Activated CD8-positive, alpha-beta T cell treated with anti-CD3 and anti-CD28 coated beads for 36 hours (primary cell): ENCODE measurements at regions of chr15 and their contacts with region 1.

Region 1: DNA sequence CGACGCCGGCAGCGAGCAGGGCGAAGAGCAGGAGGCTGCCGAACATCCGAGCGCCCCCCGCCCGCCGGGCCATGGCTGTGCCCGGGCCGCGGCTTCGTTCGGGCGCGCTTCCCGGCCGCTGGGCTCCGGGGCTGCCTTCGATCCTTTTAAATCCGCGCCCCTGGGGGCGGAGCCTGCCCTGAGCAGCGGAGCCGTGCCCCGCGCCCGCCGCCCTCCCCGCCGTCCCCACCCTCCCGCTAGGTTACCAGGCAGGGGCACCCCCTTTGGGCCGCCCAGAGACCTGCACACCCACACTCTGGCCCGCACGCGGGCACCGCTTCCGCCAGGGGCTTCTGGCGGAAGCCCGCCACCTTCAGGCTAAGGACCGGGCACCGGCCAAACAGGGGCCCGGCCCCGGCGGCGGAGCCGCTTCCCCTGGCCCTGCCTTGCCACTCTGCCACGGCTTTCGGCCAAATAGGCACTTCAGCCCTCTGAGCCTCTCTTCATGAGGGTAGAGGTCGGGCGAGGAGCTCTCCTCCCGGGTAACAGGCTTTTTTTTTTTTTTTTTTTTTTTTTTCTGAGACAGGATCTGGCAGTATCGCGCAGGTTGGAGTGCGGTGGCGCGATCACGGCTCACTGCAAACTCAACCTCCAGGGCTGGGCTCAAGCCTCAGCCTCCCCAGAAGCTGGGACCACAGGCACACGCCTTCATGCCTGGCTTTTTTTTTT is at the start of gene NMB:
- DNase-seq: peak; percentile 86
- ATAC-seq: peak; percentile 64
- H3K4me3 Mint-ChIP-seq: peak within 1 kb of the TSS; percentile 69
- H3K27ac Mint-ChIP-seq: peak within 1 kb of the TSS; percentile 83
- H3K4me1 Mint-ChIP-seq: peaks cover 31% of the 10 kb centered on the region
- H3K27me3 Mint-ChIP-seq: no peaks in the 10 kb centered on the region
- CTCF ChIP-seq: peak; percentile 71
- total RNA-seq, gene NMB: 1.7 to 2.7 TPM

Region 2: DNA sequence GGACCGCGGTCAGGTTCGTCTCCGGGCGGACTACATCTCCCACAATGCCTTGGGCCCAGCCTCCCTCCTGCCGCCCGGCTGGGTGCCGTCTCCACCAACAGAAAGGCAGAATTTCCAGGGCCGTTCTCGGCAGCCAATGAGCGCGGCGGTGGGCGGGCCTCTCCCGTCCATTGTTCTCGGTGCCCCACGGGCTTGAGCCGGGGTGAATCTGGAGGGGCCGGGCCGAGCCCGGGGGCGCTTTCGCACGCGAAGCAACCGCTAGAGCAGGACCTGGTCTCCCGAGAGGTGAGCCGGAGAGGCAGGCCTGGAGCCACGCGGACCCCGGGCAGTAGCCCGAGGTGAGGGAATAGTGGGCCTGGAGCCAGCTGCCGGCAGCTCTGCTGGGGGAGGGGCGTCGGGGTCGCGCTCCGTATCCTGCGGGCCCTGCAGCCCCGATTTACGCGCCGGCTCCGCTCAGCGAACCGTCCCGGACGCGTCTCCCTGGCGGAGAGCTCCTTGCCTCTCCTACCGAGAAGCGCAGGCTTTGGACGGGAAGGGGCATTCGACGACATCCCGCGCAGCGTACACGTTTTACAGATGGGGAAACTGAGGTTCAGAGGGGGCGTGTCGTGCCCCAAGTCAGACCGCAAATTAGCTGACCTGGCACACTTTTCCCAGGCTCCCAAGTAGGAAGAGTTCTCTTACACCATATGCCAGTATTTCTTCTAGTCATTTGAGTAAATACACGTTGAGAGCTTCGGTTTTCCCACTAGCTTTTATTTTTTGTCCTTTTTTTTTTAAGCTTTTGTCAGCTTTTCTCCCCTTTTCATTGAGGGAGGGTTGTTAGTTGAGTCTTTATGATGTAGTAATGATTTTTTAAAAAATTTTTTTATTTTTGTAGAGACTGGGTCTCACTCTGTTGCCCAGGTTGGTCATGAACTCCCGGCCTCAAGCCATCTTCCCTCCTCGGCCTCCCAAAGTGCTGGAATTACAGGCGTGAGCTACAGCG is 57.1 kb before region 1 on chr15 and contains the start of gene ZSCAN2:
- CTCF ChIA-PET with region 1: interaction called, 33 read pairs
- POLR2A ChIA-PET with region 1: interaction called, 20 read pairs
- intact Hi-C with region 1: no loop called
- DNase-seq: peak; percentile 98
- ATAC-seq: peak; percentile 96
- H3K4me3 Mint-ChIP-seq: peak within 1 kb of the TSS; percentile 91
- H3K27ac Mint-ChIP-seq: peak within 1 kb of the TSS; percentile 80
- H3K4me1 Mint-ChIP-seq: peaks cover 73% of the 10 kb centered on the region
- H3K27me3 Mint-ChIP-seq: no peaks in the 10 kb centered on the region
- CTCF ChIP-seq: no peak
- total RNA-seq, gene ZSCAN2: 6.6 to 7.6 TPM

Region 3: DNA sequence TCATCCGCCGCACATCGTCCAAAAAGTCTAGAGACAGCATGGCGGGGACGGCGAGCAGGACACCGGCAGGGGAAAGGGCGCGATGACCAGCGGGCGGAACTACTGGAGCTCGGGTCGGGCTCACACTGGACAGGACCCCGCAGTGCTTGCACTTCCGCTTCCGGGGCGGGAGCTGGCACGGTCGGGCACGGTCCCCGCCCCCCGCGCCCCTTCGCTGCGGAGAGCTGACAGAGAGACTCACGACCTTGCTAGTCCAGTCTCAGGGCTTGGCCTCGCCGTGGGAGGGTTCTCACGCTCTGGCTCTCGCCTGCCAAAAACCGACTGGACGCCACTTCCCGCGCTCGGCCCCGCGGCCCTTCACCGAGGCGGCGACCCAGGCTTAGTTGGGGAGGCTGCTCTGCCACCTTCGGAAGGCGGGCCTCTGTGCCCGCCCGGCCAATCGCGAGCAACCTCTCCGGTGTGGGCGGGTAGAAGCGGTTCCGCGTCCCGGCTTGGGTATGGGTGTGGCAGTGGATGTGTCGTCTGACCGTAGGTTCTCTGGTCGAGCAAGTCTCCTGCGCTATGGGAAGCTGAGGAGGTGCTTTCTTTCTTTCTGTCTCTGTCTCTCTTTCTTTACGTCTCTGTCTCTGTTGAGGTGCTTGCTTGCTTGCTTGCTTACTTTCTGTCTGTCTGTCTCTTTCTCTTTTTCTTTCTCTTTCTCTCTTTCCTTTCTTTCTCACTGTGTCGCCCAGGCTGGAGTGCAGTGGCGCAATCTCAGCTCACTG is 58.0 kb after region 1 on chr15 and contains the start of gene SEC11A:
- CTCF ChIA-PET with region 1: interaction called, 3 read pairs
- POLR2A ChIA-PET with region 1: interaction called, 10 read pairs
- intact Hi-C with region 1: no loop called
- DNase-seq: peak; percentile 93
- ATAC-seq: peak; percentile 93
- H3K4me3 Mint-ChIP-seq: peak within 1 kb of the TSS; percentile 83
- H3K27ac Mint-ChIP-seq: peak within 1 kb of the TSS; percentile 88
- H3K4me1 Mint-ChIP-seq: peaks cover 48% of the 10 kb centered on the region
- H3K27me3 Mint-ChIP-seq: no peaks in the 10 kb centered on the region
- CTCF ChIP-seq: no peak
- total RNA-seq, gene SEC11A: 82.3 to 87.8 TPM

Region 4: DNA sequence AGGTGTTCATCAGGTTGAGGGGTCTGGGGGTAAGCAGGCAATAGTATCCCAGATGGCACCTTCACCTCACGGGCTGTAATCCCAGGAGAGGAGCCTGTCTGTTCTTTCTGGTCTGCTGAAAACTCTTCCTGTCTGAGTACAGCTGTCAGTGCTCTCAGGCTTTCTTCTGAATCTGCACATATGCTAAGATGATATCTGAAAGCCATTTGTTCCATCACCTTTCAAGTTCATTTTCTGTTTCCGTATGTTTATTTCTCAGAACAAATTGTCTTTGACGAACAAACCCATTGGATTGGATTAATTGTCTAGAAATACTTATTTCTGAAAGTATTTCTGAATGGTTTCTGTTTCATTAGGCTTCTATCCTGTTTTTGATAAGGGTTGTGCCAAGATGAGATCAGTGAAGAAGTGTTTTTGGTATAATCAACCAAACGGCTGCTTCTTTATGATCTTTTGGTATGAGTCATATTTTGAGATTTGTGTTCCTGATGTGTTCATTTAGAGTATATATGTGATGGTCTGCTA is 103.4 kb after region 1 on chr15:
- CTCF ChIA-PET with region 1: interaction called, 4 read pairs
- POLR2A ChIA-PET with region 1: interaction called, 3 read pairs
- intact Hi-C with region 1: loop called (anchors 5 kb)
- DNase-seq: no peak
- ATAC-seq: peak; percentile 82
- H3K4me3 Mint-ChIP-seq: no peak overlapping the region
- H3K27ac Mint-ChIP-seq: no peak overlapping the region
- H3K4me1 Mint-ChIP-seq: peaks cover 10% of the 10 kb centered on the region
- H3K27me3 Mint-ChIP-seq: no peaks in the 10 kb centered on the region
- CTCF ChIP-seq: no peak

Region 5: DNA sequence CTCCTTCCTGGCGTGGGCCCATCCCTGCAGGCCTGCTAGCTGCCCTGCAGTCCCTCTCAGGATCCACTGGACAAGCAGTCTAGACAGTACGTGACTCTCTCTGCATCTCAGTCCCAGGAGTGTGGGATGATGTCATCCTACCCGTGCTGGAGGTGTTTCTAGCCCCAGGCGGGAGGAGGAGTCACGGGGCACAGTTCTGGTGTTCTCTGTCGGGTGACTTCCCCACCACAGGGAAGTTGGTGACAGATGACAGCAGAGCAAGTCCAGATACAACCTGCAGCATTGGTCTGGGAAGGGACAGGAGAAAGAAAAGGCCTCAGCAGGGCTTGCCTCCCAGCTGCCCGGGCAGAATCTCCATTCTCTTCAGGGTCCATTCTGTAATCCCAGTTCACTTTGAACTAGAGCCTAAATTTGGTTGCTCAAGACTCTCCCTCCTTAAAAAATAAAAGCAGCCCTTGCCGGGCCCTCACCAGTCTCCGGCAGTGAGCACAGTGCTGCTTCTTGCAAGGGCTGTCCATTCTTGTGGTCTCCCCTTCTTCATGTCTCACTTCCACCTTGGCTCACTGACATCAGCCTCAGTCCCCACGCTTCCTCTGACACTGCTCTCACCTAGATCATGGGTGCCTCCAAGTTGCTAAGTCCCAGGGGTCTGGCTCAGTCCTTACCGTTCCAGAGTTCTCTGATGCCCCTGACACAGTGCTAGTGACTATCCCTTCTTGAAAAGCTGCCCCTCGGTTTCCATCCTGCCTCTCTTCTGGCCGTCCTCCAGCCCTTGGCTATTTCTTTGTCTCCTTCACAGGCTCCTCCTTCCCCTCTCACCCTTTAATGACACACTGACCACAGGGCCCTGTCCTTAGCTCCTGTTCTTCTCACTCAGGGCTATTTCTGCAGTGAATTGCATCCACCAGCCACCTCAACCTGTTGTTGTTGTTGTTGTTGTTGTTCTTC is 257.1 kb after region 1 on chr15:
- CTCF ChIA-PET with region 1: no interaction called
- POLR2A ChIA-PET with region 1: no interaction called
- intact Hi-C with region 1: no loop called
- DNase-seq: peak; percentile 88
- ATAC-seq: peak; percentile 99
- H3K4me3 Mint-ChIP-seq: peak overlapping the region; percentile 77
- H3K27ac Mint-ChIP-seq: peak overlapping the region; percentile 95
- H3K4me1 Mint-ChIP-seq: peaks cover 23% of the 10 kb centered on the region
- H3K27me3 Mint-ChIP-seq: peaks cover 6% of the 10 kb centered on the region
- CTCF ChIP-seq: no peak